ENCODE measurements at regions of chr11 and their contacts with region 1.

Region 1: DNA sequence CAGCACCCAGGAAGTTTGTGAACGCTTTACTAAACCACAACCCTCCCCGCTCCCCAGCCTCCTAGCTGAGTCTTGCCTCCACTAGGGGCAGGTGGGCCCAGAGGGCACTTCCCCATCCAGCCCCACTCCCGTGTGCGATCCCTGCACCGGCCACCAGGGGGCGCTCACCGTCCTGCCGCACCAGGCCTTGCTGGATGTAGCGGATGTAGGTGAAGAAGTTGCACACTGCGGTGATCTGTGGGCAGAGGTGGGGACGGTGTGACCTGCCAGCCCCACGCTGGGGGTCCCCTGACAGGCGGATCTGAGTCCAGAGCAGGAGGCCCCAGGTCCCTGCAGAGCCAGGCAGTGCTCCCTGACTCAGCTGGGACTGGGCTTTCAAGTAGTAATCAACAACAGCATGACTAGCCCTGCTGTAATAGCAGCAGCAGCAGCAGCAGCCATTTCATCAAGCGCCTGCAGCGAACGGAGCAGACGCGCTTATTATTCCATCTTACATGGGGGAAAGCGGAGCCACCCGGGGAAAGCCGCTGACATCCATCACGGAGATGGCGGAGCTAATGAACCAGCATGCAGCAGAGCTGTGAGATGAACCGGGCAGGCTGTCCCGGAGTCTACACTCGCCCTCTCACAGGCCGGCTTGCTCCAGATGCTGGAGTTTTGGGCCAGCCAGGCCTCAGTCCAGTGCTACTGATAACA is 7.9 kb upstream of the FADS3 start:
- DNase-seq: peak; percentile 95
- CTCF ChIP-seq: peak; percentile 100

Region 2: DNA sequence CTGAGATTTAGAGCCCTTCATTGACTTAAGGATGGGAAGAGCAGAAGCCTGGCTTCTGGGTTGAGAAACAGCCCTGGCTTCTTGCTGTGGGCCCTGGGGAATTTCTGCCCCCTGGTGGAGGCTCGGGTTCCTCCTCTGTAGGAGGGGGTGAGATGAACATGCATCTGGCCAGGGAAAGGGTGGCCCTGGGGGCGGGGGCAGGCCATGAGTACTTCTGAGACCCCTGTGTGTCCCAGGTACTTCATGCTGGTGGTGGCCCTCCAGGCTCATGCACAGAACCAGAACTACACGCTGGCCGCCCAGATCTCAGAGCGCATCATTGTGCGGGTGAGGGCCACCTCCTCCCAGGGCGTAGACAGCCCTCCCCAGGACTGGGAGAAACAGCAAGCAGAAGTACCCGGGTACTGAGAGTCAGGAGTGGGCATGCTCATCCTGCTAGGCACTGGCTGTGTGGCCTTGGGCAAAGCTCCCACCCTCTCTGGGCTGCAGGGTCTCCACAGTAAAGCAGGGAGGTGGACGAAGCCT is 122.7 kb before region 1 on chr11:
- CTCF ChIA-PET with region 1: no interaction called
- POLR2A ChIA-PET with region 1: no interaction called
- DNase-seq: peak; percentile 90
- CTCF ChIP-seq: peak; percentile 68

Region 3: DNA sequence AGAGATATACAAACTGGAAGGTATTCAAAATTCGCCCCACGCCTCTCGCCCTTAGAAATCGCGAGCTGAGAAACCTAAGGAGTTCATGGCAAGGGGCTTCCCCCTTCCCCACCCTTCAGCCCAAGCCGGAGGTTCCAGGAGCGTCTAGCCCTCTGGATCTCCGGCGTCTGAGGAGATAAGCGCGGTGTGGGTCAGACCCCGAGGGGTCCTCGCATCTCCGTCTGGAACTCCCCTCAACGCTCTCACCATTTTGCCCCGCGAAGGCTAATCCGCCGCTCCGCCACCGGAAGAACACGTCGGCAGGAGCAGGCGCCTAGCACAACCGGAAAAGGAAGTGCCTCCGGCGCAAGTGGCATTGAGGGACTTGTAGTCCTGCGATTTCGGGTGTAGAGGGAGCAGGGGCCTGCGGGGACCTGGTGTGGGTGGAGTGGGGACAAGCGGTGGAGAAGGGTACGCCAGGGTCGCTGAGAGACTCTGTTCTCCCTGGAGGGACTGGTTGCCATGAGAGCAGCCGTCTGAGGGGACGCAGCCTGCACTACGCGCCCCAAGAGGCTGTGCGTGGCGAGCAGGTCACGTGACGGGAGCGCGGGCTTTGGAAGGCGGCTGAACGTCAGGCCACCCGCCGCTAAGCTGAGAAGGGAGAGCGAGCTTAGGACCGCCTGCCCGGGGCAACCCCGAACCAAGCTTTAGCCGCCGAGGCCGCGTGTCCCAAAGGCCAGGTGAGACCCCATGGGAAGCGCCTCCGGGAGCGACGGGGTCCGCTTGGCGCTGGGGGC is 106.8 kb before region 1 on chr11 and contains the starts of genes FEN1 and TMEM258:
- CTCF ChIA-PET with region 1: interaction called, 100 read pairs
- POLR2A ChIA-PET with region 1: no interaction called
- DNase-seq: peak; percentile 93
- CTCF ChIP-seq: no peak

Region 4: DNA sequence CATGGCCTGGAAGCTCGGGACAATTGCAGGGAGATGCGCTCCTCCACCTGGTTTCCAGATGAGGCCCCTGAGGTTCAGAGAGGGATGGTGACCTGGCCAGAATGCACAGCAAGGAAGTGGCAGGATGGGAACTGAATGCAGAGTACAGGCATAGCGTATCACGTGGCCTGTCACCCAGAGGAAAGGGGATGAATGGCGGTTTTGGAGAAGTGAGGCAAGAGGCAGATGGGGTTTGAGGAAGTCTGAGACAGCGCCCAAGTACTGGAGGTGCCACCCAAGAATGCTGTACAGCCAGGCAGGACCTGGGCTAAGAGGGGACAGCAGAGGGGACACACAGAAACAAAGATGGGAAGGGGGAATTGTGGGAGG is 13.2 kb after region 1 on chr11:
- CTCF ChIA-PET with region 1: interaction called, 80 read pairs
- POLR2A ChIA-PET with region 1: no interaction called
- DNase-seq: no peak
- CTCF ChIP-seq: no peak

Region 5: GRCh38 chr11:61928606-61929005 is 29.3 kb after region 1 on chr11:
- CTCF ChIA-PET with region 1: interaction called, 23 read pairs
- POLR2A ChIA-PET with region 1: no interaction called
- DNase-seq: no peak
- CTCF ChIP-seq: no peak

Region 6: GRCh38 chr11:61967116-61967923 is 68.0 kb after region 1 on chr11 and contains the start of gene FTH1:
- CTCF ChIA-PET with region 1: interaction called, 10 read pairs
- POLR2A ChIA-PET with region 1: interaction called, 9 read pairs
- DNase-seq: peak; percentile 94
- CTCF ChIP-seq: no peak

Region 7: DNA sequence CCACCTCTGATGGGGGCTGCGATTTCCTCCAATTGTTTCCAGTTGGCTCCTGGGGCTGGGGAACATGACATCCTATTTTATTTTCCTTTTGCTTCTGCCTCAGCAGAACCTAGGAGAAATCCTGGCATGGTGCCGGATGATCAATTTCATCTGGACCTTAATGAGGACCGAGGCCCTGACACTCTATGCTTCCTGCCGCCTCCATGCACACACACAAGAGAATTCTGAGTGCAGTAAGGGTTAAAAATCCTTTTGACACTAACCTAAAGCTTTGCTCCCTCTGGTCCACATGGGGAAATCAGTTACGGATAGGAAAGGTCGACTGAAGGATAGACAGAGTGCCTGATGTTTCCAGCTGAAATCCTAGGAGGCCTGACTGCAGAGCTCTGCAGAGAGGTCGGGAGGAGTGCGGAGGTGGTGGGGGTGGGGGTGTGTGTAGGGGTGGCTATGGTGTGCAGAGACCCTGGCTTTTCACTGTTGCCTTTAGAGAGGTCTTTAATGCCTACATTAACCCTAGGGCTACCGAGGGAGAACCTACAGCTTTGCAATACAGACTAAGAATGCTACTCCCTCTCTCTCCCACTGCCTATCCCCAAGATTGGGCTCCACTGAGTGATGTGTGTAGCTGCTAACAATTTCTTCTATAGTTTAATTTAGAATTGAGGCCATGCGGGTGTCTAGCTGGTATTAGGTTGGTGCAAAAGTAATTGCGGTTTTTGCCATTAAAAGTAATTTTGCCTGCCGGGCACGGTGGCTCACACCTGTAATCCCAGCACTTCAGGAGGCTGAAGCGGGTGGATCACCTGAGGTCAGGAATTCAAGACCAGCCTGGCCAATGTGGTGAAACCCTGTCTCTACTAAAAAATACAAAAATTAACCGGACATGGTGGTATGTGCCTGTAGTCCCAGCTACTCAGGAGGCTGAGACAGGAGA is 171.0 kb after region 1 on chr11:
- CTCF ChIA-PET with region 1: interaction called, 424 read pairs
- POLR2A ChIA-PET with region 1: no interaction called
- DNase-seq: no peak
- CTCF ChIP-seq: no peak

Measured in GM10248 (cell line).